Transverse colon (tissue), 4 donors: ENCODE measurements at regions of chr12 and their contacts with region 1.

Region 1: GRCh38 chr12:18906395-18906794 is 168.5 kb downstream of the CAPZA3 start:
- DNase-seq: no peak
- H3K4me3 ChIP-seq: no peak overlapping the region
- H3K27ac ChIP-seq: no peak overlapping the region
- H3K4me1 ChIP-seq: no peaks in the 10 kb centered on the region
- H3K27me3 ChIP-seq: no peaks in the 10 kb centered on the region
- CTCF ChIP-seq: no peak
- EP300 ChIP-seq: no peak
- POLR2A ChIP-seq: no peak

Region 2: DNA sequence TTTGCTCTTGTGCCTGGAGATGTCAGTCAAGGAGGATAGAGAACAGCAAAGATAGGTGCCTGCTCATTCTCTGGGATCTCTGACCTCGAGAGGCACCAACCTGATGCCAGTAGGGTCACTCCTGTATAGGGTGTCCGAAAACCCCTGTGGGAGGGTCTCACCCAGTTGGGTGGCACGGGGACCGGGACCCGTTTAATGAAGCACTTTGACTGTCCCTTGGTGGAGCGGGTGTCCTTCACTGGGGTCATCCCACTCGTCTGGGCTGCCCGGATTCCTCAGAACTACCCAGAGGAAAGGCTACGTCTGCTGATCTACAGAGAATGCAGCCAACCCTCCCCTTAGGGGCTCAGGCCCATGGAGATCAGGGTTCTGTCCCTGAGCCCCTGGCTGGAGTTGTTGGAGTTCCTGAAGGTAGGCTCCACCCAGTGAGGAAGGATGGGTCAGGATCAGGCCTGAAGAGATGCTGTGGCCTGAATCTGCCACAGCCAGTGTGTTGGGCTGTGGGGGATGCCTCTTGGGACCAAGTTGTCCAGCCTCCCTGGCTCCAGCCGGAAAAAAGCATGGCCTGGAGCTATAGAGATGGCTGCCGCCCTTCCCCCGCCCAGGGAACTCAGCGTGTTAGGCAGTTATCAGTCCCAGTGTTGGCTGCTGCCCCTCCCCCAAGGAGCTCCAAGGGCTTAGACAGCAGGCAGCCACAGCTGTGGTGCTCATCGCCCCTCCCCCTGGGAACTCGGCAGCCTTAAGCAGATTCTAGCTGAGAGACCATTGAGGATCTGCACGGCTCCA is 10.7 kb before region 1 on chr12:
- in situ Hi-C with region 1: no loop called
- intact Hi-C with region 1: loop called (anchors 1 kb)
- DNase-seq: no peak
- H3K4me3 ChIP-seq: no peak overlapping the region
- H3K27ac ChIP-seq: no peak overlapping the region
- H3K4me1 ChIP-seq: peaks cover 0 to 3% (median 0%) of the 10 kb centered on the region in 4 donors
- H3K27me3 ChIP-seq: no peaks in the 10 kb centered on the region
- CTCF ChIP-seq: no peak
- EP300 ChIP-seq: no peak
- POLR2A ChIP-seq: no peak

Region 3: GRCh38 chr12:19014240-19014639 is 107.8 kb after region 1 on chr12:
- in situ Hi-C with region 1: no loop called
- intact Hi-C with region 1: no loop called
- DNase-seq: no peak
- H3K4me3 ChIP-seq: no peak overlapping the region
- H3K27ac ChIP-seq: no peak overlapping the region
- H3K4me1 ChIP-seq: peaks cover 0 to 13% (median 8%) of the 10 kb centered on the region in 4 donors
- H3K27me3 ChIP-seq: no peaks in the 10 kb centered on the region
- CTCF ChIP-seq: no peak
- EP300 ChIP-seq: no peak
- POLR2A ChIP-seq: no peak